Activated CD4-positive, alpha-beta T cell treated with anti-CD3 and anti-CD28 coated beads for 36 hours (primary cell): ENCODE measurements at regions of chr1 and their contacts with region 1.

Region 1: GRCh38 chr1:145795257-145795881 is 28.5 kb downstream of the RNF115 start:
- DNase-seq: no peak
- ATAC-seq: no peak
- H3K4me3 Mint-ChIP-seq: no peak overlapping the region
- H3K27ac Mint-ChIP-seq: no peak overlapping the region
- H3K4me1 Mint-ChIP-seq: peaks cover 13% of the 10 kb centered on the region
- H3K27me3 Mint-ChIP-seq: no peaks in the 10 kb centered on the region

Region 2: DNA sequence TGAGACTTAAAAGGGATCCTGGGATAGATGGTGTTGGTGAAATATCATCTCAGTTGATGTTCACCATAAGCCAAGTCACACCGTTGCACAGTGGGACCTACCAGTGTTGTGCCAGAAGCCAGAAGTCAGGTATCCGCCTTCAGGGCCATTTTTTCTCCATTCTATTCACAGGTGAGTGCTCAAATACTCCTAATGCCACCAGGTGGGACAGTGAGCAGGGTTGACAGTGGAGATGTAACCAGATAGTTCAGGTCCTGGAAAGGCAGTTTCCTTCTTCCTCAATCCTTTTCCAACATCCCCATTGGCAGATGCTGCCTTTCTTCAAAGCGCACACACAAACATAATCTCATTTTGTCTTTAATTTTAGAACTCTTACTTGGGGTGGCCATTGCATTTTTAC is 64.5 kb before region 1 on chr1:
- CTCF ChIA-PET with region 1: no interaction called
- POLR2A ChIA-PET with region 1: no interaction called
- intact Hi-C with region 1: loop called in 1 of 2 experiments (anchors 10 kb)
- DNase-seq: no peak
- ATAC-seq: no peak
- H3K4me3 Mint-ChIP-seq: no peak overlapping the region
- H3K27ac Mint-ChIP-seq: no peak overlapping the region
- H3K4me1 Mint-ChIP-seq: no peaks in the 10 kb centered on the region
- H3K27me3 Mint-ChIP-seq: no peaks in the 10 kb centered on the region